A673 (cell line): ENCODE measurements at regions of chr7 and their contacts with region 1.

Region 1: DNA sequence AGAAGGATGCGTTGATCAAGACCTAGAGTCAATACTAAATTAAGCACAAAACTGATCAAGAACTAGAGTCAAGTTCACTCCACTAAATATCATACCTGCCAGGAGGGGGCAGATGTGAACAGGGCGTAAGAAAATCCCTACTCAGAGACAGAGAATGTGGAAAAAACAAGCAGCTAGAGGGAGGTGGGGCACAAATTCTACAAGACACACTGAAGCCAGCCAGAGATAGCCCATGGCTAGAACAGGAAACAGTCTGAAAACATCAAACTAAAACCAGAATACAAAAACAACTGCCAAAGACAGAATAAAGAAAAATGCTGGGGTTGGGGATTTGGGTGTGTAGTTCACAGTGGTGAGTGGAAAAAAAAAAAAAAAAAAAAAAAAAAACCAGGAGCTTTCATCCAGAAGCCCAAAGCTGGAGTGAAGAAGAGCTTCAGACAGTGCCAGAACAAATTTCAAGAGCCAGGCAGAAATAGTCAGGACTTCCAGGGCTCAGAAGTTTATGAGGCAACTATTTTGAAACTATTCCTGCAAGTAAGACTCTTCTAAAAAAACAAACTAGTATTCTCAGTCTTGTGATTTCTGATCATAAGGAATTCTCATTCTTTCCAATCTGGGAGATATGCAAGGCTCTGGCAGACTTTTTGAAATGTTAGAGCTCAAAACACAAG is 118.3 kb downstream of the CCDC71L start:
- DNase-seq: peak; percentile 79
- H3K4me3 ChIP-seq: no peak overlapping the region
- H3K27ac ChIP-seq: no peak overlapping the region
- H3K4me1 ChIP-seq: no peaks in the 10 kb centered on the region
- H3K27me3 ChIP-seq: no peaks in the 10 kb centered on the region
- CTCF ChIP-seq: peak; percentile 80

Region 2: GRCh38 chr7:106659963-106660861 is 117.5 kb after region 1 on chr7:
- CTCF ChIA-PET with region 1: interaction called, 5 read pairs
- POLR2A ChIA-PET with region 1: no interaction called
- intact Hi-C with region 1: loop called (anchors 2 kb)
- DNase-seq: peak; percentile 82
- H3K4me3 ChIP-seq: peak overlapping the region; percentile 84
- H3K27ac ChIP-seq: peak overlapping the region; percentile 87
- H3K4me1 ChIP-seq: peaks cover 8% of the 10 kb centered on the region
- H3K27me3 ChIP-seq: no peaks in the 10 kb centered on the region
- CTCF ChIP-seq: peak; percentile 84

Region 3: DNA sequence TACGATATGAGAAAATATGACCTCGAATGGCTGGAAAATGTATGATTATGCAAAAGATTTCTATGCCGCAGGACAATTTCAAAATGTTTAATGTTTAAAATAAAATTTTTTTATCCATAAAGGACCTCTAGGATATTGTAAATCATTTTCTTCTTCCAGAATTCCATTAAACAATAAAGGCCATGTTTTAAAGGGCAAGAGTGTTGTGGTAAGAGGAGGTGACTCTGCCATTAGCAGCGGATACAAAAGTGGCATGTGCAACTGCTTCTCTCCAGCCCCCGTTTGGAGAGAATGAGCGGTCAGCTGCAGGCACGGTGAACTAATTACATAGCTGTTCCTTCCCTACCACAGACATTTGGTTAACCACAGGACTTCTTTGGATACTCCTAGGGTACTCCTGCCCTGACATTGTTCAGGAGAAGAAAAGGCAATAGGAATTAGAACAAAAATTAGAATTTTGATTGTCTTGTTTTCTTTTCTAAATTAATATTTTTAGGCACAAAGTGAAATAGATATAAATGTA is 689.9 kb after region 1 on chr7:
- CTCF ChIA-PET with region 1: no interaction called
- POLR2A ChIA-PET with region 1: no interaction called
- intact Hi-C with region 1: no loop called
- DNase-seq: no peak
- H3K4me3 ChIP-seq: no peak overlapping the region
- H3K27ac ChIP-seq: no peak overlapping the region
- H3K4me1 ChIP-seq: no peaks in the 10 kb centered on the region
- H3K27me3 ChIP-seq: no peaks in the 10 kb centered on the region
- CTCF ChIP-seq: no peak